ENCODE measurements at regions of chr2 and their contacts with region 1.

Region 1: GRCh38 chr2:174341286-174341994 is 6.7 kb downstream of the SP9 start:
- DNase-seq: peak; percentile 58
- ATAC-seq: peak; percentile 54
- H3K4me3 ChIP-seq: no peak overlapping the region
- H3K27ac ChIP-seq: no peak overlapping the region
- H3K4me1 ChIP-seq: peaks cover 0 to 27% of the 10 kb centered on the region in 2 experiments; a peak in 2 of 4 replicates
- H3K27me3 ChIP-seq: no peaks in the 10 kb centered on the region
- CTCF ChIP-seq: peak; percentile 92 to 99 (median 97)
- POLR2A ChIP-seq: no peak
- RAD21 ChIP-seq: peak; percentile 99

Region 2: GRCh38 chr2:173749315-173749714 is 592.1 kb before region 1 on chr2:
- CTCF ChIA-PET with region 1: no interaction called
- POLR2A ChIA-PET with region 1: no interaction called
- RAD21 ChIA-PET with region 1: no interaction called
- intact Hi-C with region 1: loop called (anchors 5 kb)
- DNase-seq: peak; percentile 27
- ATAC-seq: peak; percentile 52; the same call in 1 of the 2 replicates
- H3K4me3 ChIP-seq: no peak overlapping the region
- H3K27ac ChIP-seq: no peak overlapping the region
- H3K4me1 ChIP-seq: no peaks in the 10 kb centered on the region
- H3K27me3 ChIP-seq: no peaks in the 10 kb centered on the region
- CTCF ChIP-seq: peak; percentile 28 to 58 (median 42); a peak in 5 of 6 replicates
- POLR2A ChIP-seq: no peak
- RAD21 ChIP-seq: peak; percentile 77

Region 3: GRCh38 chr2:173965329-173966025 is 376.0 kb before region 1 on chr2 and contains the start of gene SP3:
- CTCF ChIA-PET with region 1: interaction called, 4 read pairs
- POLR2A ChIA-PET with region 1: no interaction called
- RAD21 ChIA-PET with region 1: no interaction called
- intact Hi-C with region 1: loop called (anchors 10 kb)
- DNase-seq: peak; percentile 93
- ATAC-seq: peak; percentile 79
- H3K4me3 ChIP-seq: peak within 1 kb of the TSS; percentile 81 to 84
- H3K27ac ChIP-seq: peak within 1 kb of the TSS; percentile 96
- H3K4me1 ChIP-seq: peaks cover 17 to 28% of the 10 kb centered on the region in 2 experiments; a peak in 3 of 4 replicates
- H3K27me3 ChIP-seq: no peaks in the 10 kb centered on the region
- CTCF ChIP-seq: no peak
- POLR2A ChIP-seq: peak; percentile 19
- RAD21 ChIP-seq: peak; percentile 15; the same call in 1 of the 2 replicates
- total RNA-seq, gene SP3: 98.0 TPM

Region 4: GRCh38 chr2:174158003-174158402 is 183.4 kb before region 1 on chr2:
- CTCF ChIA-PET with region 1: interaction called, 8 read pairs
- POLR2A ChIA-PET with region 1: no interaction called
- RAD21 ChIA-PET with region 1: no interaction called
- intact Hi-C with region 1: loop called (anchors 1 kb)
- DNase-seq: peak; percentile 51
- ATAC-seq: peak; percentile 91
- H3K4me3 ChIP-seq: no peak overlapping the region
- H3K27ac ChIP-seq: no peak overlapping the region
- H3K4me1 ChIP-seq: peaks cover 6 to 19% of the 10 kb centered on the region in 2 experiments
- H3K27me3 ChIP-seq: no peaks in the 10 kb centered on the region
- CTCF ChIP-seq: peak; percentile 44 to 71 (median 70); a peak in 5 of 6 replicates
- POLR2A ChIP-seq: no peak
- RAD21 ChIP-seq: peak; percentile 69

Region 5: GRCh38 chr2:174172802-174173355 is 168.6 kb before region 1 on chr2:
- CTCF ChIA-PET with region 1: no interaction called
- POLR2A ChIA-PET with region 1: no interaction called
- RAD21 ChIA-PET with region 1: no interaction called
- intact Hi-C with region 1: no loop called
- DNase-seq: no peak
- ATAC-seq: no peak
- H3K4me3 ChIP-seq: no peak overlapping the region
- H3K27ac ChIP-seq: no peak overlapping the region
- H3K4me1 ChIP-seq: no peaks in the 10 kb centered on the region
- H3K27me3 ChIP-seq: no peaks in the 10 kb centered on the region
- CTCF ChIP-seq: no peak
- POLR2A ChIP-seq: no peak
- RAD21 ChIP-seq: no peak

Region 6: GRCh38 chr2:174561283-174561971 is 220.0 kb after region 1 on chr2:
- CTCF ChIA-PET with region 1: no interaction called
- POLR2A ChIA-PET with region 1: no interaction called
- RAD21 ChIA-PET with region 1: no interaction called
- intact Hi-C with region 1: no loop called
- DNase-seq: no peak
- ATAC-seq: no peak
- H3K4me3 ChIP-seq: no peak overlapping the region
- H3K27ac ChIP-seq: no peak overlapping the region
- H3K4me1 ChIP-seq: no peaks in the 10 kb centered on the region
- H3K27me3 ChIP-seq: no peaks in the 10 kb centered on the region
- CTCF ChIP-seq: no peak
- POLR2A ChIP-seq: no peak
- RAD21 ChIP-seq: no peak

Measured in HCT116 (cell line).